Sciatic nerve (tissue), 2 donors: ENCODE measurements at regions of chr2 and their contacts with region 1.

Region 1: DNA sequence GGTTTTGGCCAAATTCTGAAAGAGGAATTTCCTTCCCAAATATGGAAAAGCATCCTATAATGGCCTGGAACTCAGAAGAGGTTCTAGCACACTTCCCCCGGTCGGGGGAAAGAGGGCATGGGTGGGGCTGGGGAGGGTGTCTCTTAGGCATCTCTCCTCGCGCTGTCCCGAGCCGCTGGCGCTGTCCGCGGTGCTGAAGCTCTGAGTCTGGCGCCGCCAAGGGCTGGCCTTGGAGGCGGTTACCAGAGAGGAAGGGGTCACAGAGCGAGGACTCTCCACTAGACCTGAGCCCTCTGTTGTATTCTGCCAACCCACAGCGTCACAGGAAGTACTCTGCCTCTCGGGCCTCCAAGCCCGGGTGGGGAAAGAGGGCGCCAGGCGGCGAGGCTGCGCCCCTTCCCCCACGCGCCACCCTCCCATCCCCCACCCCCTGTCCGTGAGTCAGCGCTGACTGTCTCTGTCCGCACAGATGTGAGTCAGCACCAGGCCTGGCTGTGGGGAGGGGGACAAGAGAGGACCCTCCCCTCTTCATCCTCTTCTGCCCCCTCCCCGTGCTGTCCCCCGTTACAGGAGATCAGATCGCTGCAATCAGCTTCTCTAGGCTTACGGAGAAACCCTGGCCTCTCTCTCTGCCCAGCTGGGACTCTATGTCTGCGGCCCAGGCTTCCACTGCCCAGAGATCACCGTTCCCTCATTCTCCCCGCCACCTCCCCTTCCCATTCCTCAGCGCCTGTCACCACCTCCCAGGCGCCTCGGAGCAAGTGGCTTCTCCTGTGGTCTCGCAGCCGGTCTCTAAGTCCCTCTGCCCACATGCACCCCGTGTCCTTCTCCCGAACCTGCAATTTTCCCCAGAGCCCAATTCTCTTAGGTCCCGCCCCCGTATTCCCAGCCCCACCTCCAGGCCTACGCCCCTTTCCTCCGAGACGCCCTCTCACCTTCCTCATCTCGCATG is 783 bp downstream of the PTPRN start:
- DNase-seq: peak; percentile 79
- ATAC-seq: peak; percentile 82

Region 2: GRCh38 chr2:217440000-217440399 is 1868.4 kb before region 1 on chr2:
- intact Hi-C with region 1: no loop called
- DNase-seq: no peak
- ATAC-seq: no peak

Region 3: GRCh38 chr2:219388127-219388844 is 79.9 kb after region 1 on chr2:
- intact Hi-C with region 1: loop called (anchors 10 kb)
- DNase-seq: peak; percentile 99
- ATAC-seq: peak; percentile 90

Region 4: GRCh38 chr2:220347626-220348025 is 1039.2 kb after region 1 on chr2:
- intact Hi-C with region 1: no loop called
- DNase-seq: no peak
- ATAC-seq: no peak